Right lobe of liver (tissue), 6 donors: ENCODE measurements at regions of chr7 and their contacts with region 1.

Region 1: DNA sequence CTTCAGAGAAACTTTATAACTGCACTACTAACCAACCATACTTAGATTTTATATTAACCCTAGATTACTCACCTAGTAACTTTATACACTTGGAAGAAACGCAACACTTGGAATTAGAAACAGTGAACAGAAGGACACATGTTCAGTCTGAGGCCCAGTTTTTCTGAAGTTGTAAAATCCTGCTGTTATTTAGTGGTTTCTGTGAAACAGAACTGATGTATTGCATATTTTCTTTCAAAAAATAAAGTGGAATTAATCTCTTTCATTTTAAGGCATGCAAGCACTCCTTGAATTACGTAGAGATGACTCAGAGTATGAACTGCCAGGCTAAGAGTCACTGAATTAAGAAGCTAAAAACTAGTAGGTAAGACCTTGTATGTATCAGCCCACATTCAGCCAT is 215.8 kb downstream of the SKAP2 start:
- DNase-seq: no peak
- ATAC-seq: no peak
- H3K4me3 ChIP-seq: no peak overlapping the region
- H3K27ac ChIP-seq: no peak overlapping the region
- H3K4me1 ChIP-seq: no peaks in the 10 kb centered on the region
- H3K27me3 ChIP-seq: no peaks in the 10 kb centered on the region
- CTCF ChIP-seq: no peak
- POLR2A ChIP-seq: no peak

Region 2: GRCh38 chr7:26388256-26388655 is 260.3 kb before region 1 on chr7:
- intact Hi-C with region 1: loop called in 1 of 2 experiments (anchors 10 kb)
- DNase-seq: no peak
- ATAC-seq: no peak
- H3K4me3 ChIP-seq: no peak overlapping the region
- H3K27ac ChIP-seq: no peak overlapping the region
- H3K4me1 ChIP-seq: no peaks in the 10 kb centered on the region
- H3K27me3 ChIP-seq: no peaks in the 10 kb centered on the region
- CTCF ChIP-seq: no peak
- POLR2A ChIP-seq: no peak

Region 3: DNA sequence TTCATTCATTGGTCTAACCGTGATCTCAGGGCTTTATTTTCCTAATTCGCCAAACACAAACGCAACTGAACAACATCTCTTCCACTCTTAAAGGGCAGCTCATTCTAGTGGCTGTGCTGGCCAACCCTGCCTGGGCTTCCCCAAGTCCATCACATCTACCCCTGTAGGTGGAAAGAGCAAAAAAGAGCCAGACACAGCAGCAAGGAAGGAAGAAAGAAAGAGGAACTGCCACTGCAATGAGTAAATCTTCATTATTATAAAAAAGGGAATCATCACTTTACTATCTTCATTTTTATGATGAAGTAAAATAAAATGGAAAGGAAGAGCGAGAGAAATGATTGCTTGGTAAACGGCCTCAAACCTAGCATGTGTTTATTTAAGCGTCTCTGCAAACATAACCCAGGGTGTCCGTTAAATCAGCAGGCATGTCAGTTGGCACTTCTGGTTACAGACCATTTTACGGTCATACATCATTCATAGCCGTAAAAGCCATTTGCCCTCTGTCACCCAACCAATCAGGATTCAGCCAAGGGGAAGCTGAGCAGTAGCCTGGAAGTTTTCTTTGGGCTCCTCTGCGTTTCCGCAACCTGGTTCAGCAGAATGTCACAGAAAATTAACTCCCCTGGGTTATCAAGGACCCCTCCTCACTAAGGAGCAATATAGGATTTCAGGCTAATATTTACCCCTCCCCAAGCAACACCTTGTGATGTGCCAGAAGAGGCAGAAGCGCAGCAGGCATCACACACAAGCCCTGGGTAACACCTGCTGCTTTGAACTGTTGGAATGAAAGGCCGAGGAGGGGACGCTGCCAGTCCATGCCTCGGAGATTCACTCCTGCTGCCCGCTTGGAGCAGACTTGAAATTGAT is 122.9 kb before region 1 on chr7:
- intact Hi-C with region 1: no loop called
- DNase-seq: no peak
- ATAC-seq: no peak
- H3K4me3 ChIP-seq: no peak overlapping the region
- H3K27ac ChIP-seq: no peak overlapping the region
- H3K4me1 ChIP-seq: peaks cover 0 to 2% (median 0%) of the 10 kb centered on the region in 4 donors
- H3K27me3 ChIP-seq: no peaks in the 10 kb centered on the region
- CTCF ChIP-seq: no peak
- POLR2A ChIP-seq: no peak